ENCODE measurements at regions of chr9 and their contacts with region 1.

Region 1: GRCh38 chr9:88468226-88468625 is 66.8 kb upstream of the NXNL2 start:
- DNase-seq: no peak
- ATAC-seq: no peak
- H3K4me3 ChIP-seq: no peak overlapping the region
- H3K27ac ChIP-seq: no peak overlapping the region
- H3K4me1 ChIP-seq: no peaks in the 10 kb centered on the region
- H3K27me3 ChIP-seq: no peaks in the 10 kb centered on the region
- CTCF ChIP-seq: no peak
- POLR2A ChIP-seq: no peak
- RAD21 ChIP-seq: no peak

Region 2: GRCh38 chr9:88287972-88288371 is 180.3 kb before region 1 on chr9:
- CTCF ChIA-PET with region 1: no interaction called
- POLR2A ChIA-PET with region 1: no interaction called
- dilution Hi-C with region 1: no loop called
- in situ Hi-C with region 1: no loop called
- intact Hi-C with region 1: no loop called
- DNase-seq: no peak
- ATAC-seq: no peak
- H3K4me3 ChIP-seq: no peak overlapping the region
- H3K27ac ChIP-seq: no peak overlapping the region
- H3K4me1 ChIP-seq: no peaks in the 10 kb centered on the region
- H3K27me3 ChIP-seq: no peaks in the 10 kb centered on the region; the same call in 1 of the 2 replicates
- CTCF ChIP-seq: no peak
- POLR2A ChIP-seq: no peak
- RAD21 ChIP-seq: no peak

Region 3: DNA sequence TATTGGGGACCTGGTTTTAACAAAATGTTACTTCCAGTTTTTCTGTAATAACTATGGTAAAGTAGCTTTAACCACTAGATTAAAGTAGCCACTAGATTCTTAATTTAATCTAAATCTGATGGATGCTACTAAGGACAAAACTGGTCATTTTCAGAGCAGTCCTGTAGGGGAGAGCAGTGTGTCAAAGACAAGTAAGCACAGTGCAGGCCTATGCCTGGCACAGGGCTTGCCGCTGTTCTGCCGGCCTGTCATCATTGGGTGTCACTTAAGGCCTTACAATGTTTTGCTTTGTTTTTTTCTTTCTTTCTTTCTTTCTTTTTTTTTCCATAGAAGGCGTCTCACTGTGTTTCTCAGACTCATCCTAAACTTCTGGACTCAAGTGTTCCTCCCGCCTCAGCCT is 13.7 kb after region 1 on chr9:
- CTCF ChIA-PET with region 1: no interaction called
- POLR2A ChIA-PET with region 1: interaction called, 17 read pairs
- dilution Hi-C with region 1: no loop called
- in situ Hi-C with region 1: no loop called
- intact Hi-C with region 1: no loop called
- DNase-seq: no peak
- ATAC-seq: no peak
- H3K4me3 ChIP-seq: no peak overlapping the region
- H3K27ac ChIP-seq: no peak overlapping the region
- H3K4me1 ChIP-seq: peaks cover 11% of the 10 kb centered on the region
- H3K27me3 ChIP-seq: no peaks in the 10 kb centered on the region
- CTCF ChIP-seq: 0 out of 2 replicates have a peak, but pooled peaks have one; percentile 16
- POLR2A ChIP-seq: no peak
- RAD21 ChIP-seq: peak; percentile 26; the same call in 1 of the 2 replicates